Heart right ventricle (tissue), 16 donors: ENCODE measurements at regions of chr6 and their contacts with region 1.

Region 1: GRCh38 chr6:138403801-138404661 is at the start of gene HEBP2:
- DNase-seq: peak; percentile 95
- ATAC-seq: peak; percentile 92 to 95 (median 94)
- H3K4me3 ChIP-seq: peak within 1 kb of the TSS; percentile 43 to 92 (median 78)
- H3K27ac ChIP-seq: peak within 1 kb of the TSS; percentile 86 to 98 (median 95)
- H3K4me1 ChIP-seq: peaks cover 0 to 28% (median 20%) of the 10 kb centered on the region in 9 donors
- H3K27me3 ChIP-seq: no peaks in the 10 kb centered on the region
- CTCF ChIP-seq: peak; percentile 51 to 82 (median 68)
- total RNA-seq, gene HEBP2: 88.4 to 108 (median 100) TPM

Region 2: DNA sequence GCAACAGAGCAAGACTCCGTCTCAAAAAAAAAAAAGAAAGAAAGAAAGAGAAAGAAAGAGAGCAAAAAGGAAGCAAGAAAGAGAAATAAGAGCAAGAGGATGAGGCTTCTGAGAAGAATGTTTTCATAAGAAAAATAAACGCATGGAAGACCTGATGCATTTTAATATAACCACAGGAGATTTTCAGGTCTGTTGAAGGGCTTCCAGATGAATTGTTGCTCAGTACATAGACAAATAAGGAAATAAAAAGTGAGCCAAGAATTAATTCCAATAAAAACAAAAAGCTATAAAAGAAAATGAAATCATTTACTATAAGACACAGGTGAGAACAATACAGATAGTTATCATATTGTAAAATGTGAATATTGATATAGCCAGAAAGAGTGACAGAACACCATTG is 340.3 kb before region 1 on chr6:
- intact Hi-C with region 1: no loop called
- DNase-seq: no peak
- ATAC-seq: no peak
- H3K4me3 ChIP-seq: no peak overlapping the region
- H3K27ac ChIP-seq: no peak overlapping the region
- H3K4me1 ChIP-seq: no peaks in the 10 kb centered on the region
- H3K27me3 ChIP-seq: no peaks in the 10 kb centered on the region
- CTCF ChIP-seq: no peak

Region 3: GRCh38 chr6:138155443-138155842 is 248.6 kb before region 1 on chr6:
- intact Hi-C with region 1: no loop called
- DNase-seq: no peak
- ATAC-seq: no peak
- H3K4me3 ChIP-seq: no peak overlapping the region
- H3K27ac ChIP-seq: no peak overlapping the region
- H3K4me1 ChIP-seq: peaks cover 0 to 7% (median 0%) of the 10 kb centered on the region in 9 donors
- H3K27me3 ChIP-seq: peaks cover 0 to 47% (median 3%) of the 10 kb centered on the region in 7 donors
- CTCF ChIP-seq: no peak

Region 4: GRCh38 chr6:138297761-138298298 is 106.2 kb before region 1 on chr6:
- intact Hi-C with region 1: loop called in 5 of 10 experiments (anchors 5 to 10 kb)
- DNase-seq: no peak
- ATAC-seq: peak in 1 of 8 donors; percentile 33
- H3K4me3 ChIP-seq: no peak overlapping the region
- H3K27ac ChIP-seq: no peak overlapping the region
- H3K4me1 ChIP-seq: peaks cover 0 to 4% (median 0%) of the 10 kb centered on the region in 9 donors
- H3K27me3 ChIP-seq: no peaks in the 10 kb centered on the region
- CTCF ChIP-seq: no peak

Region 5: GRCh38 chr6:138307816-138308728 is 96.0 kb before region 1 on chr6:
- intact Hi-C with region 1: loop called in 2 of 10 experiments (anchors 5 to 10 kb)
- DNase-seq: peak; percentile 29 to 39
- ATAC-seq: peak; percentile 74 to 94 (median 89)
- H3K4me3 ChIP-seq: no peak overlapping the region
- H3K27ac ChIP-seq: peak overlapping the region in 7 of 10 donors; percentile 26 to 80 (median 69)
- H3K4me1 ChIP-seq: peaks cover 0 to 19% (median 10%) of the 10 kb centered on the region in 9 donors
- H3K27me3 ChIP-seq: no peaks in the 10 kb centered on the region
- CTCF ChIP-seq: peak in 6 of 9 donors; percentile 11 to 50 (median 38)

Region 6: DNA sequence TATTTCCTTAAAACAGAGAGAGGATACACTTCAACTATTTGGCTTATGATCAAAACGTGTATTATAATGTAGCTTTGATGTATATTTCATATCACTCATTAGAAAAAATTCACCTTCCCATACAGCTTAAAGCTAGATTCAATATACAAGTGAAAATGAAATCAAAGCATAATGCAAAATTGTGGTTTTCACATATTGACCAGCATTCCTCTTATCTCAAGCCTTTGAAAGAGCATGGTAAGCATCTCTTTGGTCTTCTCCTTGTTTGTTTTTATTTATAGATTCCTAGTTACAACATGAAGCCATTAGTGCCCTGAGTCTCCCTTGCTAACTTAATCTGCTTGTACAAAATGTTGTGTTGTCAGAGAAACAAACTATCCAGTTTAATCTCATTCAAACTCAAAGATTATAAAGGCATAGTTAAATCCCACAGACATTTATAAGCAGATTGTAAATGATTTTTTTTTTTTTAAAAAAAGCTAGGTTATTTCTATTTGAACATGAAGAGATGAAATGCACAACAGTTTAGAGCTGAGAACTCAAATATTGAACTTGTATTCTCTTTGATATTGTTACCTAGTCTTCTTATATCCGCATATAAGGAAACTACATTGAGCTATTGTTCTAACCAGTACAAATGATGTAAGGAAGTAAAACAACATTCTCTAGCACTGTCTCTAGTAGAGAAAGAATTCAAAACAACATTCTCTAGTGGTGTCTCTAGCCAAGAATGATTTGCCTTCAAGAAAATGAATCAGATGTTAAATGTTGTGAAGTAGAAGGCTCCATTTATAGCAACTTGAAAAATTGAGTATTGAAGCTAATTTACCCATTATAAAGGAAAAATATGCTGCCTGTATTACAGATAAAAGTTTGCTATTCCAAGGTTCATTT is 57.5 kb before region 1 on chr6:
- intact Hi-C with region 1: no loop called
- DNase-seq: no peak
- ATAC-seq: no peak
- H3K4me3 ChIP-seq: no peak overlapping the region
- H3K27ac ChIP-seq: no peak overlapping the region
- H3K4me1 ChIP-seq: peaks cover 0 to 10% (median 0%) of the 10 kb centered on the region in 9 donors
- H3K27me3 ChIP-seq: no peaks in the 10 kb centered on the region
- CTCF ChIP-seq: no peak

Region 7: DNA sequence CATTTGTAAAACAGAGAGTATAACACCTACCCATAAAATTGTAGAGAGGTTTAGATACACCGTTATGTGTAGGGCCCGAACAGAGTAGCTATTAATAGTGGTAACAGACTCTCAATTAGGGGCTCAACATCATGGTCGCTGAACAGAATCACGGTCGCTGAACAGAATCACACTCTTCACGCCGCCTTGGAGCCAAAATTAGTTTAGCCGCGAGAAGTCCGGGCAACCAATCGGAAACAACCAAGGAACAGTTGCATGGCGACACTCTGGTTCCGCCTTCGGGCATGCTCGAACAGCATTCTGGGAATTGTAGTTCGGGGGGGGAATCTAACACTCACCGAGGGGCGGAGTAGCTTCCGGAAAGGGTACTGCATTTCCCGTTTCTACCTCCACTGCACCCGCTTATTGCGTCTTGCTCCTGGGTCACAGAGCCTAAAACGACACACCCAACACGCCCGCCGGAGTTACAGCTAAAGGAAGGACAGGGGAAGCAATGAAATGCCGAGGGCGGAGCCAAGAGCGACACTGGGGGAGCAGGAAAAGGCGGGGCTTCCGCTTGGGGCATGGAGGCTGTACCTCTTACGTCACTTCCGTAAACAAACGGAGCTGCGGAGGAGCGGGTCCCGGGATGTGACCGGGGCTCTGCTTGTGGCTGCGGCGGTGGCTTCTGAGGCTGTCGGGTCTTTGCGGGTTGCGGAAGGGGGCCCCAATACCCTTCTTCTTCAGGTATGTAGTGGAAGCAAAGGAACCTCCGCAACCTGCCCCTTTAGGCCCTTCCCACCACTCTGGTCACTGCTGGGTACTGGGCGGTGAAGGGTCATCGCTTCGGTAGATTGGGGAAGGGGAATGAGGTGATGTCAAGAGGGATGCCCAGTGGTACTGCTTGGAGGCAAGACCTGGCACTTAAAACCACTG is 369.4 kb after region 1 on chr6 and contains the start of gene CCDC28A:
- intact Hi-C with region 1: loop called in 1 of 10 experiments (anchors 5 kb)
- DNase-seq: peak; percentile 91 to 96
- ATAC-seq: peak; percentile 97 to 99 (median 98)
- H3K4me3 ChIP-seq: peak within 1 kb of the TSS; percentile 69 to 96 (median 84)
- H3K27ac ChIP-seq: peak within 1 kb of the TSS; percentile 90 to 99 (median 96)
- H3K4me1 ChIP-seq: peaks cover 2 to 30% (median 22%) of the 10 kb centered on the region in 9 donors
- H3K27me3 ChIP-seq: no peaks in the 10 kb centered on the region
- CTCF ChIP-seq: peak in 1 of 9 donors; percentile 9
- total RNA-seq, gene CCDC28A: 4.9 to 15.6 (median 9.5) TPM